ENCODE measurements at regions of chr16 and their contacts with region 1.

Region 1: DNA sequence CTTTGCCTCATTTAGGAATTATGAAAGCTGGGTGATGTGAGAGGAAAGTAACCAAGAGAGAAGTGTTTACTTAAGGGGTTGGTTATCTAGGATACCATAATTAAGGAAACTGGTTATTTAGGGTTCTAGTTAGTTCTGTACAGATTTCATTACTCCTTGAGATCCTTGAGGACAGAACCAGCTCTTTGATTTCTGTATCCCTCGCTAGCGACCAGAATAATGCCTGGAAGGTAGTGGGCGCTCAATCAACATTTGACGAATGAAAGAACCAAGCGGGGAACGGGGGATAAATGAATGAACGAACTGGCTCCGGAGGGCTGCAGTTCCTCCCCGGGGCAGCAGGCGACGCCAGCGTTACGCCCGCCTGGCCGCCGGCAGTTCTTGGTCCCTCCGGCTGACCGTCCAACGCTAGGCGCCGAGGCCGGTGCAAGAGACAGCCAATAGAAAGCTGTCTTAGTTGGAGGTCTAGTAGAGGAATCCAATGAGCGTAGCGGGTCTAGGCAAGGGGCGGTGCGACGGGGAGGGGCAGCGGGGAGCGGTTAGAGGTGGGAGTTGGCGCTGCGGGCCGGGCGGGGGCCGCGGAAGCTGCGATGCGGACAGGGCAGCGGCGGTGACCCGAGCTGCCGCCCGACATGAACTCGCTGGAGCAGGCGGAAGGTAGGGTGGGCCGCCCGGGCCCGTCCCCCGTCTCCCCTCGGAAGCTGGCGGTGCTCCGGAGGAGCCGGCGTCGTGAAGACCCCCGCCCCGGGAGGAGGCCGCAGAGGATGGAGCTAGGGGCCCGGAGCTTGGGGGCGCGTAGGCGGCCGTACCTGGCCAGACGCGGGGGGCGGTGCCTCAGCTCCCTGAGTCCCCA is at the start of gene CNEP1R1:
- DNase-seq: peak; percentile 99
- H3K4me3 ChIP-seq: peak within 1 kb of the TSS; percentile 84 to 89
- H3K27ac ChIP-seq: peak within 1 kb of the TSS; percentile 21 to 81; a peak in 3 of 4 replicates
- H3K4me1 ChIP-seq: peaks cover 5 to 14% of the 10 kb centered on the region in 2 experiments; a peak in 3 of 4 replicates
- H3K27me3 ChIP-seq: no peaks in the 10 kb centered on the region
- CTCF ChIP-seq: peak; percentile 99
- EP300 ChIP-seq: no peak; a peak in 1 of 4 replicates
- RAD21 ChIP-seq: peak; percentile 88
- polyA plus RNA-seq, gene CNEP1R1: 19.2 and 21.6 TPM in 2 replicates

Region 2: GRCh38 chr16:49866595-49867071 is 158.3 kb before region 1 on chr16:
- CTCF ChIA-PET with region 1: no interaction called
- POLR2A ChIA-PET with region 1: no interaction called
- DNase-seq: peak; percentile 90
- H3K4me3 ChIP-seq: no peak overlapping the region
- H3K27ac ChIP-seq: peak overlapping the region in 1 of 2 experiments; percentile 93; a peak in 2 of 4 replicates
- H3K4me1 ChIP-seq: peaks cover 0 to 18% of the 10 kb centered on the region in 2 experiments; a peak in 1 of 4 replicates
- H3K27me3 ChIP-seq: peaks cover 12% of the 10 kb centered on the region; the same call in 1 of the 2 replicates
- CTCF ChIP-seq: no peak
- EP300 ChIP-seq: no peak
- RAD21 ChIP-seq: peak; percentile 17; the same call in 1 of the 2 replicates

Region 3: GRCh38 chr16:49961089-49961488 is 63.8 kb before region 1 on chr16:
- CTCF ChIA-PET with region 1: interaction called, 15 read pairs
- POLR2A ChIA-PET with region 1: interaction called, 3 read pairs
- DNase-seq: no peak
- H3K4me3 ChIP-seq: no peak overlapping the region
- H3K27ac ChIP-seq: no peak overlapping the region
- H3K4me1 ChIP-seq: peaks cover 0 to 19% of the 10 kb centered on the region in 2 experiments; a peak in 1 of 4 replicates
- H3K27me3 ChIP-seq: no peaks in the 10 kb centered on the region; the same call in 1 of the 2 replicates
- CTCF ChIP-seq: no peak
- EP300 ChIP-seq: no peak
- RAD21 ChIP-seq: no peak

Region 4: GRCh38 chr16:49997721-49998251 is 27.1 kb before region 1 on chr16:
- CTCF ChIA-PET with region 1: interaction called, 15 read pairs
- POLR2A ChIA-PET with region 1: no interaction called
- DNase-seq: no peak
- H3K4me3 ChIP-seq: no peak overlapping the region
- H3K27ac ChIP-seq: no peak overlapping the region
- H3K4me1 ChIP-seq: no peaks in the 10 kb centered on the region
- H3K27me3 ChIP-seq: no peaks in the 10 kb centered on the region
- CTCF ChIP-seq: no peak
- EP300 ChIP-seq: no peak
- RAD21 ChIP-seq: no peak

Region 5: GRCh38 chr16:50038756-50039529 is 14.0 kb after region 1 on chr16:
- CTCF ChIA-PET with region 1: interaction called, 22 read pairs
- POLR2A ChIA-PET with region 1: interaction called, 3 read pairs
- DNase-seq: no peak
- H3K4me3 ChIP-seq: no peak overlapping the region
- H3K27ac ChIP-seq: no peak overlapping the region
- H3K4me1 ChIP-seq: peaks cover 2 to 14% of the 10 kb centered on the region in 2 experiments; a peak in 2 of 4 replicates
- H3K27me3 ChIP-seq: no peaks in the 10 kb centered on the region
- CTCF ChIP-seq: no peak
- EP300 ChIP-seq: no peak
- RAD21 ChIP-seq: no peak

Region 6: GRCh38 chr16:50065624-50066481 is 40.9 kb after region 1 on chr16 and contains the start of gene HEATR3:
- CTCF ChIA-PET with region 1: interaction called, 24 read pairs
- POLR2A ChIA-PET with region 1: interaction called, 7 read pairs
- DNase-seq: peak; percentile 97
- H3K4me3 ChIP-seq: peak within 1 kb of the TSS; percentile 76 to 93
- H3K27ac ChIP-seq: peak within 1 kb of the TSS; percentile 89 to 95
- H3K4me1 ChIP-seq: peaks cover 12 to 17% of the 10 kb centered on the region in 2 experiments; a peak in 3 of 4 replicates
- H3K27me3 ChIP-seq: no peaks in the 10 kb centered on the region
- CTCF ChIP-seq: no peak
- EP300 ChIP-seq: no peak
- RAD21 ChIP-seq: no peak
- polyA plus RNA-seq, gene HEATR3: 10.1 and 12.9 TPM in 2 replicates

Region 7: DNA sequence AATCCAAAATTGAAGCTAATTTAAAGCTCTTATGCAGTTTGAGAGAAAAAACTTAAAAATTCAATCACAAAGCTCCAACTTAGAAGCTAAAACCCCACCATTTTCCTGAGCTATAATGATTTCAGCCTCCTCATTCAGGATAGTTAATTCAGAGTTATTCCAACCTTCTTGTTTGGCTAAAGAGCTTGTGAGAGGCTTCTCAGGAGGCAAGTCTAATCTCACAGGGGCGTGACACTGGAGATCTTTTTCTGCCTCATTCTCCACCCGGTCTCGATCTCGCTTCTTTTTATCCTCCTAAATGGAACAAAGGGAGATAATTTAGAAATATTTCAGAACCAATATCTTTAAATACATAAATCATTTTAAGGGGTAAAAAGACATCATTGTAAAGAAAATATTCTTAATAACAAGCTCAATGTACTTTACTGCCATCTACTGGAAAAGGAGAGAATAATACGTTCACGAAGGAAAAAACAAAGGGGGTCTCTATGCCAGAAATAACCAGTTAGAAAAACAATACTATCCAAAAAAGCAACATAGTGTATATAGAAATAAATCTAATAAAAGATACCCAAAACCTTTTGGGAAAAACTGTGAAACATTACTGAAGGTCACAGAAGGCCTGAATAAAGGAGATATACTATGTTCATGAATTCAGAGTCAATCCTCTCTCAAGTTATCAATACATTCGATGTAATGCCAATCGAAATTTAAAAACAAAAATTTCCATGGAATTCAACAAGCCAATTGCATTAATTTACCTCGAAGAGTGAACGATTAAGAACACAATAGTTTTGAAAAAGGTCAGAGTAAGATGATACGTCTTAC is 329.9 kb after region 1 on chr16:
- CTCF ChIA-PET with region 1: interaction called, 18 read pairs
- POLR2A ChIA-PET with region 1: no interaction called
- DNase-seq: peak; percentile 58
- H3K4me3 ChIP-seq: no peak overlapping the region
- H3K27ac ChIP-seq: no peak overlapping the region
- H3K4me1 ChIP-seq: no peaks in the 10 kb centered on the region; a peak in 1 of 4 replicates
- H3K27me3 ChIP-seq: no peaks in the 10 kb centered on the region
- CTCF ChIP-seq: peak; percentile 84
- EP300 ChIP-seq: no peak
- RAD21 ChIP-seq: peak; percentile 60

Region 8: GRCh38 chr16:50473356-50473945 is 448.5 kb after region 1 on chr16:
- CTCF ChIA-PET with region 1: no interaction called
- POLR2A ChIA-PET with region 1: no interaction called
- DNase-seq: no peak
- H3K4me3 ChIP-seq: no peak overlapping the region
- H3K27ac ChIP-seq: no peak overlapping the region
- H3K4me1 ChIP-seq: peaks cover 0 to 17% of the 10 kb centered on the region in 2 experiments; a peak in 1 of 4 replicates
- H3K27me3 ChIP-seq: no peaks in the 10 kb centered on the region
- CTCF ChIP-seq: no peak
- EP300 ChIP-seq: no peak
- RAD21 ChIP-seq: no peak

Measured in SK-N-SH (cell line).